Left cardiac atrium (tissue), 4 donors: ENCODE measurements at regions of chr17 and their contacts with region 1.

Region 1: DNA sequence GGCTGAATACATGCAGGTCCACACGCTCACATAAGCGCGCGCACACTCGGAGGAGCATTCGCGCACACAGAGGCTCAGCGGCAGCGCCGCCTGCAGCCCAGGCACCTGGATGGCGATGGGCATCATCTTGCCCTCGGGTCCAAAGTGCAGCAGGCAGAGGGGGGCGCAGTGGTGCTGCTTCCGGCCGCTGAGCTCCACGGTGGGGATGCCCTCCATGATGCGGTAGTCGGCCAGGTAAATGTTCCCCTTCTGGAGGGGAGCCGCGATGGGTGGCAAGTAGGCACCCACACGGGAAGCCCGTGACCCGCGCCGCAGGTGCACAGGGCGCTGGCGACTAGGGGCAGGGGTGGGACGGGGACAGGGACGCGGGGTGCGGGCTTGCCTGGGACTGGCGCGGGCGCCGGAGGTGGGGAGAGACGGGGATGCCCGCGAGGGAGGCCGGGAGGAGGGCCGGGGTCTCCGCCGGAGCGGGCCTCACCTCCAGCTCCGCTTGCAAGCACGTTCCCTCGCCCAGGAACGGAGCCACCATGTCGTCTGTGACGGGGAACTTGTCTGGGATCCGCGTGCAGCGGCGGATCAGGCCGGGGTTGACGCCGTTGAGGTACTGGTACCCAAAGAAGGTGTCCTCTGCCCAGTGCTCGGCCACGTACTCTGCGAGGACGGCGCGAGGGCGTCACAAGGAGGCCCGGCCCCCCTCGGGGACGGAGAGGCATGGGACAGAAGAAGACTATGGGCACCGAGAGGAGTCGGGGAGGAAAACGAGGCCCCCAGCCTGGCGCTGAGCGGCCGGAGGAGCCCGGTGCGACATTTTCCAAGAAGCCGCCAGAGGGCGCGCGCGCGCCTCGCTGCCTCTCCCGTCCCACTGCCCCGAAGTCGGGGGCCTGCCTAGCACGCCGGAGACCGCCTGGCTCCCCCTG is 8.0 kb downstream of the ALOX12B start:
- DNase-seq: peak; percentile 78
- ATAC-seq: peak; percentile 93

Region 2: GRCh38 chr17:8109661-8110464 is 30.3 kb after region 1 on chr17:
- intact Hi-C with region 1: loop called in 1 of 2 experiments (anchors 5 kb)
- DNase-seq: peak; percentile 61
- ATAC-seq: peak; percentile 75 to 82

Region 3: DNA sequence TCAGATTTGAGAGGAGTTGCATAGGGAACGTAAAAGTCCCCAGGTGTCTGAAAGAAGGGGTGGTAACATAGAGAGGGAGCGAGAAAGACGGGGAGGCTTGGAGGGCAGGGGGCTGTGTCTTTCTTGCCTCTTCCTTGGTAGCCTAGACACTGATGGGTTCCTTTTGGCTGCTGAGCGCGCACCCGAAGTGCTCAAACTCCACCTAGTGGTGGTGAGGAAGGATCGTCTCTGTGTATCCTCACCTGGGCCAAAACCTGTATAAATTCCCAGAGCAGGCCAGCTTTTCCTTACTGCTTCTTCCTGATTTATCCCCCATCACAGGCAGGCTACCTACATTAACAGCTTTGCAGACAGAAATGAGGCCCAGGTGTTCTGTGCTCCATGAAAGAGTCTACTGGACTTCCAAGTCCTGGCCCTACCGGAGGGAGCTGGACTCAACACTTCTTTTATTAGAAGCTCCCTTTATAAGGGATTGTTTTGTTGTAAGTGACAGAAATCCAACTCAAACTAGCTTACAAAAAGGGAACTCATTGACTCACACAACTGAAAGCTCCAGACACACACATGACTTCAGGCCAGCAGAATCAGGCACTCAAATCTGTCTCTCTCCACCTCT is 221.2 kb after region 1 on chr17:
- intact Hi-C with region 1: loop called in 1 of 2 experiments (anchors 10 kb)
- DNase-seq: peak; percentile 67
- ATAC-seq: peak; percentile 92 to 93